ENCODE measurements at regions of chr13 and their contacts with region 1.

Region 1: GRCh38 chr13:106548064-106548696 is 12.7 kb upstream of the EFNB2 start:
- DNase-seq: no peak
- ATAC-seq: no peak
- H3K4me3 ChIP-seq: no peak overlapping the region
- H3K27ac ChIP-seq: no peak overlapping the region
- H3K4me1 ChIP-seq: peaks cover 7% of the 10 kb centered on the region
- H3K27me3 ChIP-seq: no peaks in the 10 kb centered on the region

Region 2: DNA sequence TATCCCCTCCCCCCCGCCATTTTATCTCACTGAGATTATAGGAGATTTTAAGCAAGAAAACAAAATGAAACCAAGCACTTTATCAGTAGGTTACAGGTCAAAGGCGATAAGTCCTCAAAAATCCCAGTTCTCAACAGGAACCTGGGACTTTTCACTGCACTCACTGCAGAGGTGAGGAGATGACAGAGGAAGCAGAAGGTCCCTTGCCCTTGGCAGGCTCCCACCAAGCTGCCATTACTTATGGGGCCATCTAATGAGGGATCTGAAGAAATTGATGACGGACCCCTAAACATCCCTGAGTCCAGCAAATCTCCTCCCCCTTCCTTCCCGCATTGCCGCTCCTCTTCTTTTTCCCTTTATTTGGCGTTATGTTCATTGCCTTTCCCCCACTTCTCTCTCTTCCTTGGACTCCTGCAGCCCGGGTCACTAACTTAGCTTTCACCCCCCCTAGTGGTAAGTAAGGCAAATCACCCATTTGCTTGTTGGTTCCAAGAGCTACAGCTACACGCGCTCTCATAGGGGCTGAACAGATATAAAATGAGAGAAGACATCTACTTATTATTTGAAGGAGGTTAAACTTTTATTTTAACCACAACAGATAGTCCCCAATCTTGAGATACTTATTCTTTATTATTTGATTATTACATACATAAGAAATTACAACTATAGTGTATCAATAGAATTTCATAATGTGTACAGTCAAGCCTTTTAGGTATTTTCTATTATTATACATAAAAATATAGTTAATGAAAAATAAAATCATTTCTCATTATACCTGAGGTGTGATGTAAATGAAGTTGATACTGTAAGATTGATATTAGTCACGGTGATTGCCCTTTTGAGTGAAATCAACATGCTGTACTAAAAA is 71.7 kb after region 1 on chr13:
- intact Hi-C with region 1: loop called in 1 of 4 experiments (anchors 10 kb)
- DNase-seq: peak in 1 of 3 donors; percentile 52
- ATAC-seq: peak; percentile 91
- H3K4me3 ChIP-seq: peak overlapping the region; percentile 14
- H3K27ac ChIP-seq: peak overlapping the region; percentile 42
- H3K4me1 ChIP-seq: no peaks in the 10 kb centered on the region
- H3K27me3 ChIP-seq: no peaks in the 10 kb centered on the region

Region 3: DNA sequence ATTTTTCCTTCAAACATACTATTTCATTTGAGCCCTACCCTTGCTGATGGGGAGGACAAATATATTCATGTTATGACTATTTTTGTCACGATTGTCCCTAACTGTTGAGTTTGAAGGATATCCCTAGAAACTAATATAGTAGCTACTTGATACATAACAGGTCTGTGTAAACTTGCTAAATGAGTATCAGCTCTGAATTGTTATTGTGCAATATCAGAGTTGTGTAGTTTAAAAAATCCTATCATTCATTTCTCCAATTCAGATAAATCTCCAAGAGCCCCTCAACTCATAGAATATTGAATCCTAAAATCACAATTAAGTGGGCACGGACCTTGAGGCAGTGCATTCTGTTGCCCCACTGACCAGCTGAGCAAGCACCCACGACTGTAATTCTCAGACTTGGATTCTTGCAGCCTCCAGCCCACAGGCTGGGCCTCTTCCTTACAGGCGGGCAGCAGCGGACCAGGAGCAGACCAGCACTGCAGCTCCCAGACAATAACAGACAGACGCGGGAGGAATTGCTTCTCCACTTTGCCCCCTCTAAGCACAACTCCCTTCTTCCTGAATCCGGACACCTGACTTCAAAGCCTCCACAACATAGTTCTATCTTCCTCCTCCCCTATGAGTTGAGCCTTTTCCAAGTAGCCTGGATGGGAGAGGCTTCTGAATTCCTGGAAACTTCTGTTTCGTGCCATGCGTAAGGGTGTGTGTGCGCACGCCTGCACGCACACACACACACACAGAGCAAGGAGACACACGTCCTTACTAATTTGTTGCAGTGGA is 357.4 kb after region 1 on chr13:
- intact Hi-C with region 1: loop called in 1 of 4 experiments (anchors 5 kb)
- DNase-seq: no peak
- ATAC-seq: peak; percentile 78 to 96
- H3K4me3 ChIP-seq: no peak overlapping the region
- H3K27ac ChIP-seq: no peak overlapping the region
- H3K4me1 ChIP-seq: no peaks in the 10 kb centered on the region
- H3K27me3 ChIP-seq: no peaks in the 10 kb centered on the region